PC-9 (cell line): ENCODE measurements at regions of chr5 and their contacts with region 1.

Region 1: DNA sequence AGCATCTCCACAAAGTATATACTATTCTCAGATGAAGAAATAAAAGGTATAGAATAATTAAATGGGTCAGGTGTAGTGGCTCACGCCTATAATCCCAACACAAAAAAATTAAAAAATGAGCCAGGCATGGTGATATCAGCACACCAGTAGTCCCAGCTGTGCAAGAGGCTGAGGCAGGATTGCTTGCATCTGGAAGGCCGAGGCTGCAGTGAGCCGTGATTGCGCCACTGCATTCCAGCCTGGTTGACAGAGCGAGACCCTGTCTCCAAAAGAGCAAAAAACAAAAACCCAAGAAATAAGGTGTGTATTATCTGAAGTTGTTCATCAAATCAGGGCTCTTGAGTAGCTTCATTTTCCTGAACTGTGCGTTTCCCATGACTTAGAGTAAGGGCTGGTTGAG is 83.2 kb upstream of the MYO10 start:
- DNase-seq: no peak
- H3K4me3 ChIP-seq: no peak overlapping the region
- H3K27ac ChIP-seq: no peak overlapping the region
- H3K4me1 ChIP-seq: no peaks in the 10 kb centered on the region
- H3K27me3 ChIP-seq: no peaks in the 10 kb centered on the region
- CTCF ChIP-seq: no peak

Region 2: DNA sequence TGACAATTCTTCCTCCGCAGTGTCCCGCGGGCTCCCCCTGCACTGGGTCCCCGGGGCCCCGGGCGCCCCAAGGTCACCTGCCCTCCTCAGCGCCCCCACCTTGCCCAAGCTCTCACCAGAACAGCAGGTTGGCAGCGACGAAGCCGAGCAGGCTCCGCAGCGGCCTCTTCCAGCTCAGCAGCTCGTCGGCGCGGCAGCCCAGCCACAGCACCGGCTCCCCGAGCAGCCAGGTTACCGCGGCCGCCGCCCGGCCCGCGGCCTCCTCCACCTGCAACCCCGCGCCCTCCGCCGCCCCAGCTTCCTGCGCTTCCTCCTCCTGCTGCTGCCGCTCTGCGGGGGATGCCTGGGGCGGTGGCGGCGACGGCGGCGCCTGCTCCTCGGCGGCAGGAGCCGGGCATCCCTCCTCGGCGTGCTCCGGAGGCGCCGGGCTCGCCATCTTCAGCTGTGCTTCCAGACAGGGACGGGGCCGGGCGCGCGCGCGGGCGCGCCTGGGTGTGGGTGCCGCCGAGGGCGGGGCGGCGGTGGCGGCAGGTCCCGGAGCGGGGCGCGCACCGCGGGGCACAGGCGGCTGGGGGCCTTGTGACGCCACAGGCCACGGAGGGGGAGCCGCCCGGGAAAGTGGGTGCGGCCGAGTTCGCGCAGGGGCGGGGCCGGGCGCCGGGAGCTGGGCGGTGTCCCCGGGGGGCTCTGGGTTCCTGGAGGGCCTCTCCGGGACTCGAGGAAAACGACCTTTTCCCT is 402.6 kb before region 1 on chr5 and contains the start of gene RETREG1:
- CTCF ChIA-PET with region 1: no interaction called
- POLR2A ChIA-PET with region 1: no interaction called
- intact Hi-C with region 1: no loop called
- DNase-seq: peak in 1 of 2 experiments; percentile 62
- H3K4me3 ChIP-seq: peak within 1 kb of the TSS; percentile 67; the same call in 1 of the 2 replicates
- H3K27ac ChIP-seq: no peak within 1 kb of the TSS
- H3K4me1 ChIP-seq: peaks cover 8% of the 10 kb centered on the region; the same call in 1 of the 2 replicates
- H3K27me3 ChIP-seq: peaks cover 61% of the 10 kb centered on the region
- CTCF ChIP-seq: no peak
- total RNA-seq, gene RETREG1: 5.6 and 9.7 TPM in 2 replicates

Region 3: DNA sequence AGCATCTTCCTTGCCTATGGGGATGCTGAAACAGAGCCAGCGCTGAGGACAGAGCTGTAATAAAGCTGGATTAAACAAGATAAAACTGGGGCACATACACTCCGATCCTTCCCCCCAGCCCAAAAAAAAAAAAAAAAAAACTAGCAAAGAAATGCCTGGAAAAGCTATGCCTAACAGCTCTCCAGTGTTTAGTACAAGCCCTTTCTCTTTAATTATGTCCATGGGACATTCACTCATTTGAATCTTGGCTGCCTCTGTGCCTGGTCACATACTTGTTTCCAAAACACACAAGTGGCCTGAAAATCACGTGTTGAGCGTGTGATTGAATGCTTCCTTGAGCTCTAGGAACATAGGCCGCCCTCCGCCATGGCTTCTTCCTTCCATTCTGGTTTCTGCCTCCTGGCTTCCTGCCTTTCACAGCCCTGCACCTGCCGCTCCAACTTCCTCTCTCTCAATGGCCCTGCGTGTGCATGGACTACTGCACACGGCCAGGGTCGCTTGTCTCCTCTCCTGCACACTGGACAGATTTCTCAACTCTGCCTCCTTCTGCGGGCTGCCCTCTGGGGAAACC is 291.5 kb before region 1 on chr5:
- CTCF ChIA-PET with region 1: no interaction called
- POLR2A ChIA-PET with region 1: interaction called, 17 read pairs
- intact Hi-C with region 1: no loop called
- DNase-seq: no peak
- H3K4me3 ChIP-seq: no peak overlapping the region
- H3K27ac ChIP-seq: no peak overlapping the region
- H3K4me1 ChIP-seq: no peaks in the 10 kb centered on the region
- H3K27me3 ChIP-seq: no peaks in the 10 kb centered on the region
- CTCF ChIP-seq: no peak

Region 4: GRCh38 chr5:17037751-17038150 is 18.4 kb after region 1 on chr5:
- CTCF ChIA-PET with region 1: no interaction called
- POLR2A ChIA-PET with region 1: interaction called, 10 read pairs
- intact Hi-C with region 1: no loop called
- DNase-seq: no peak
- H3K4me3 ChIP-seq: no peak overlapping the region
- H3K27ac ChIP-seq: no peak overlapping the region
- H3K4me1 ChIP-seq: no peaks in the 10 kb centered on the region
- H3K27me3 ChIP-seq: no peaks in the 10 kb centered on the region
- CTCF ChIP-seq: no peak

Region 5: GRCh38 chr5:17056056-17056690 is 36.8 kb after region 1 on chr5:
- CTCF ChIA-PET with region 1: no interaction called
- POLR2A ChIA-PET with region 1: no interaction called
- intact Hi-C with region 1: no loop called
- DNase-seq: peak; percentile 5 to 49
- H3K4me3 ChIP-seq: no peak overlapping the region
- H3K27ac ChIP-seq: no peak overlapping the region
- H3K4me1 ChIP-seq: peaks cover 34% of the 10 kb centered on the region
- H3K27me3 ChIP-seq: no peaks in the 10 kb centered on the region
- CTCF ChIP-seq: no peak